ENCODE measurements at regions of chr6 and their contacts with region 1.

Region 1: GRCh38 chr6:131532580-131533039 is 40.4 kb upstream of the ARG1 start:
- DNase-seq: no peak

Region 2: DNA sequence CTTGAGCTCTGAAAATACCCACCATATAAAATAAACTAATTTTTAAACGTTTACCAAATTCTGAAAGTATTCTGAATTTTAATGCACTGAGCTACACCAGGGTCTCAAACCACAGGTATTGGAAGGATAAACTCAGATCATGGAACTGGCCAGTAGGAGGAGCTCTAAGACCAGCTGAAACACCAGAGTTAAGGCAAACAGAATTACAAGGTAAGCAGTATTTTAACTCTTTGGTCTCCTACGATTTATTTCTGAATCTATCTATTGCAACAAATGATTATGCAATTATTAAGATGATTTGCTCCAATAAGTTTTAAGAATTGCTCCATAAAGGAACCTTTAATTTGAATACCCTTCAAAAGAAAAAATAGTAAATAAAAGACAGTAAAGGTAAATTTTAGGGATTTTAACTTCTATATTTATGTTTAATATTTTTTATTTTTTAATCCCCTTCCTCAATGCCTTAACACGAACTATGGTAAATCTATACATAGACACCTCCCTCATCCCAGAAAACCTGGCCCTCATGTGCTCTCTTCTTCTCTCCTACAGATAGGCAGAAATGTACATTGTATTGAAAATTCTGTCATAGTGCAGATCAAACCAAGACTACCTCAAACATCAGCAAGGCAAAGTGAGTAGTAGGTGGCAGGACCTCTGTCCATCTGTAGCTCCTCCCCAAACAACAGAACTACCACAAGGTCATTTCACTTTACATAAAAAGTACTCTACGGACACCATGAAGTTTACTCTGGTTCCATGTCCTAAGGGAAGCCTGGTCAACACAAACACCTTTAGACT is 647.0 kb before region 1 on chr6:
- intact Hi-C with region 1: loop called (anchors 5 kb)
- DNase-seq: no peak

Region 3: GRCh38 chr6:131199568-131200272 is 332.9 kb before region 1 on chr6:
- intact Hi-C with region 1: loop called (anchors 10 kb)
- DNase-seq: no peak

Region 4: GRCh38 chr6:131476362-131476761 is 56.2 kb before region 1 on chr6:
- intact Hi-C with region 1: no loop called
- DNase-seq: no peak

Region 5: DNA sequence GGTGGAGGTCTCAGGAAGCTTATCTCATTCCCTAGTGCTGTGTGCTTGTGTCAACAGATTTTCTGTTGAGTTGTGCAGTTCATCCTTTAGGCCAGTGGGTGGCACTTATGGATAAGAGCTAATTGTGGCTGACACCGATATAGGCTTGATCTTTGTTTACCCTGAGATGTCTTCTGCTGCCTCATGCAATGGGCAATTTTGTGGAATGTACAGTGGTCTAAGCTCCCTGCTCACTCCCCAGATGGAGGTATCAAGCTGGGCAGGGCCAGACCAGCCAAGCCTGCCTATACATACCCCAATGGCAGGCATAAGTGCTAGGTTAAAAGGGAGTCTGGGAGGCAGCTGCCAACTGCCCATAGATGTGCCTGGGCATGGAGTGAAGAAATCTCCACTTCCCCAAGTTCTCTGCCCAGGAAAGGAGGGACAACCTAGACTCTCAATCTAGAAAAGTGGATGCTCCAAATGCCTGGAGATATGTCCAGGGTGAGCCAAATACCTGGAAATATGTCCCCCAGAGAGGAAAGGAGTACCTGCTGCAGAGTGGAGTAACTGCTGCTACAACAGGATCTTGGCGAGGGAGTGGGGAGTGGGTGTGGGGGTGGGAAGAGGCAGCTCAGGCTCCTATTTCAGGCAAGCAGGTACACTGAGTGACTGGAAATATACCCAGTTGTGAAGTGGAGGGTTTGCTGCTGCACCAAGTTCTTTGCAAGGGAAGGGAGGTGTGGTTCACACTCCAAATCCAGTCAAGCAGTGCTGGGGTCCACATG is 12.8 kb before region 1 on chr6:
- intact Hi-C with region 1: no loop called
- DNase-seq: no peak

Region 6: GRCh38 chr6:131565056-131565455 is 32.4 kb after region 1 on chr6:
- intact Hi-C with region 1: no loop called
- DNase-seq: no peak